Astrocyte of the cerebellum (primary cell): ENCODE measurements at regions of chr4 and their contacts with region 1.

Region 1: DNA sequence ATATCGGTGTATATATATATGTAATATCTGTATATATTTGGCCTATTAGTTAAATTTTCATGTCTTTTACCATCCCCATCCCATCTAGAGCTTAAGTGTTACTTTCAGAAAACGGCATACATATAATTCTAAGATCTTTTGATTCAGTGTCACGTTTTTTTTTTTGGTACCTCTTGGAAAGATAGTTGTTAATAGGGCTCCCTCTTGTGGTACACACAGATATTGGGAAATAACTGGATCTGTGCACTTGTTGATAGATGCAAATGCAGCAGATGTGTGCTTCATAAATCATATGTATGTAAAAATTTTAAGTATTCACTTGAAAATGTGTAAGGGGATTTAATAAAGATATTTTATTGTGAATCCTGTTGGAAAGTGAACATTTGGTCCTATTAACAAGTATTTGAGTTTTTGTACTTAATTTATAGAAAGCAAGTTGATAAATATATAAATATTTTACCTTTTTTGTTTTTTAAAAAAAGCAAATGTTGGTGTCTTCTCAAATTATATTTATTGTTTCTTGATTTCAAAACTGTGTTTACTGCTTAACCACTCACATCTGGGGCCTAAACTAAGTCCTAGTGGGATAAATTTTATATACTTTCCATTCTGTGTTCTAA is 74.7 kb downstream of the PAQR3 start:
- DNase-seq: peak; percentile 86
- H3K4me3 ChIP-seq: no peak overlapping the region
- CTCF ChIP-seq: peak; percentile 51

Region 2: DNA sequence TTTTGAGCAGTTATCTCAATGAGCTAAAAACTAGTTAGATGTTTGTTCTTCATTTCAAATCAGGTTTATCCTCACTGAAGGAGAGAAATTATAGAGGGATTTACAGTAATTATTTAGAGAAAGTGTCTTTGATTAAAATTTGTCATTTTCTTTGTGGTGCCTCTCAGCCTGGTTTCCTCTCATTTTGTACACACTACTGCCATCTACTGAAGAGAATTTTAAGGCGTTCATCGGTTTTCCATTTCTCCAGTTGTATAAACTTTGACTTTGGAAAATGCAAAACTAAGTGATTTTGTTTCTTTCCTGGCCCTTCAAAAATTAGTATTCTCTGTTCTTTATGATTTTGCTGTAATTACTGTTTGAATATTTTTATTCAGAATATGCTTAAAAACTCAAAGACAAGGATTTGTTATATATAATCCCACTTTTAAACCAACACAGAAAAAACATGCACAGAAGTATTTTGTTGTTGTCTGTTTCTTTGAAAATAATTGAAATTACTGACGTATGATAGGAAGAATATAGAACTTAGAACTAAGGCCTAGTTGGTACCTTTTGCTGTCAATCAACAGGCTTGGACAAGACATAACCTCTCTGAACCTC is 347.4 kb before region 1 on chr4:
- in situ Hi-C with region 1: no loop called
- DNase-seq: peak; percentile 27
- H3K4me3 ChIP-seq: no peak overlapping the region
- CTCF ChIP-seq: peak; percentile 63

Region 3: DNA sequence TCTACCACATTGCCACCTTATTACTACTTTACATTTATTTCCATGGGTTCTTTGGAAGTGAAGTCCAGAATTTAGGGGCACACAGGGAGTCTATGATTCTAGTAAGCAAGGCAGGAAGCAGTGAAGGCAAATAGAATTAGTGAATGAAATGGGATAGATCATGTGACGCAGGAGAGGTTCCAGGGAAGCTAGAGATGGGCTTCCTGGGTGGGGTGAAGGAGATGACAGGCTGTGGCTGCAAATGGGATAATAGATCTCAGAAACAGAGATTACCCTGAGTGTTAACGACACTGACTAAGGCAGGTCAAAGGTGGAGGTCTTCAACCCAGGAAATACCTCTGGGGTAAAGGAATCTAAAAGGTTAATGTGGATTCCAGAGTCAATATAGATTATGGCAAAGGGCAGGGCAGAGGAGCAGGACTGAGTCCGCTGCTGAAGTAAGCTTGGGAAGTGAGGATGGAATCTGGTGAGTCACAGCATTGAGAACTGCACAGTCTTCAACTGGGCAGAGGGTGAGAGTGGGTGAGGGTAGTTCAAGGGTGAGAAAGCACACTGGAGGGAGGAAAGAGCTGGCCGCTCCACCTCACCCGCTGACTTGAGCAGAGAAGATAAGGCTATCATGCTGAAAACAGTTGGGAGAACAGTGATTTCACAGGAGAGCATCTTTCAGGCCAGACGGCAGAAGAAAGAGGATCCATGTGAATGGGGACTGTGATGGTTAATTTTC is 242.1 kb before region 1 on chr4:
- in situ Hi-C with region 1: loop called (anchors 10 kb)
- DNase-seq: no peak
- H3K4me3 ChIP-seq: no peak overlapping the region
- CTCF ChIP-seq: no peak